Heart right ventricle (tissue), 16 donors: ENCODE measurements at regions of chr5 and their contacts with region 1.

Region 1: GRCh38 chr5:180784497-180785097 is 18.0 kb downstream of the MGAT1 start:
- DNase-seq: peak; percentile 77 to 86
- ATAC-seq: peak; percentile 70 to 83 (median 76)
- H3K4me3 ChIP-seq: no peak overlapping the region
- H3K27ac ChIP-seq: peak overlapping the region in 5 of 10 donors; percentile 54 to 87 (median 71)
- H3K4me1 ChIP-seq: peaks cover 25 to 53% (median 46%) of the 10 kb centered on the region in 9 donors
- H3K27me3 ChIP-seq: no peaks in the 10 kb centered on the region
- CTCF ChIP-seq: peak; percentile 49 to 90 (median 79)

Region 2: DNA sequence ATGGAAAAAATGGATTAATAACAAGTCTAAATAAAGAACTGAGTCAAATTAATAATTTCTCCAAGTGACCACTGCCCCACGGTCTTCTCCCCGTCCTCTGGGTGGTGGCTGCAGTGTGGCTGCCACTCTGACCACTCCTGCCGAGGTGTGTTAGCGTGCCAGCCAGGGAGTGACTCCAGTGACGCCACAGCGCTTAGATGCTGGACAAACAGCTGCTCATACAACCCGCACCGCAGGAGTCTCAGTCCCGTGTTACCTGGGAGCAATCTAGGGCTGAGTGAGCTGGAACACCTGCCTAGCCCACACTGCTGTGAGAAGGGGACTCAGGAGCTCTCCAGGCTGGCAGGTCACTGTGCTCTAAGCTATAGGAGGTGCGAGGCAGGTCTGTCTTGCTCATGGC is 502.9 kb before region 1 on chr5:
- intact Hi-C with region 1: no loop called
- DNase-seq: no peak
- ATAC-seq: no peak
- H3K4me3 ChIP-seq: no peak overlapping the region
- H3K27ac ChIP-seq: no peak overlapping the region
- H3K4me1 ChIP-seq: peaks cover 0 to 8% (median 7%) of the 10 kb centered on the region in 9 donors
- H3K27me3 ChIP-seq: no peaks in the 10 kb centered on the region
- CTCF ChIP-seq: no peak

Region 3: DNA sequence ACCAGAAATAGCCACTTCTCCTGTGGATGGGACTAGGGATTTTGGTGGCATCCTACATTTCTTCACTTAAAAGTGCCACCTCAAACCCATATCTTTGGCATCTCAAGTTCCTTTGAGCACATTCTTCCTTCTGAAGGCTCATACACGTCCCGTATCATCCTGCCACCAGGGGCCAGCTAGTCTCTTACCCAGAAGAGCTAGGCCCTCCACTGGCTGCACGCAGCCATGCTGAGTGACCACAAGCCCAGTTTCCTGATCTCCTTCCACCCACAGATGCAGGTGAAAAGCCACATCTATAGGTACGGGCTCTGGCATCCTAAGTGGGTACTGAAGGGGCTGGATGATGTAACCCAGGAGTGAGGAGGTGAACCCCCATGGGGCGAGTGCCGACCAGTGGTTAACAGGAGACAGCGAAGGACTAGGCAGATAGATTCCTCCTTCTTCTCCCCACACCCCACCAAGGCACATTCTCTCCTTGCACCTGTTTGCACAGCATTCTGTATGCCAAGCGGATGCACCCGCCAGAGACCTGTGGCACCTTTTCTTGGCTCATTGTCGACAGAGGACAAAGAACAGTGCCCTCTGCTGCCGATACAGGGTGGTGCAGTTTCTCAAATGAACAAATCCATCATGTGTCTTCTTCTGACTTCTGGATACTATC is 178.9 kb before region 1 on chr5:
- intact Hi-C with region 1: no loop called
- DNase-seq: peak in 1 of 2 donors; percentile 8
- ATAC-seq: no peak
- H3K4me3 ChIP-seq: no peak overlapping the region
- H3K27ac ChIP-seq: no peak overlapping the region
- H3K4me1 ChIP-seq: no peaks in the 10 kb centered on the region
- H3K27me3 ChIP-seq: peaks cover 0 to 14% (median 0%) of the 10 kb centered on the region in 7 donors
- CTCF ChIP-seq: peak in 8 of 9 donors; percentile 40 to 76 (median 61)

Region 4: DNA sequence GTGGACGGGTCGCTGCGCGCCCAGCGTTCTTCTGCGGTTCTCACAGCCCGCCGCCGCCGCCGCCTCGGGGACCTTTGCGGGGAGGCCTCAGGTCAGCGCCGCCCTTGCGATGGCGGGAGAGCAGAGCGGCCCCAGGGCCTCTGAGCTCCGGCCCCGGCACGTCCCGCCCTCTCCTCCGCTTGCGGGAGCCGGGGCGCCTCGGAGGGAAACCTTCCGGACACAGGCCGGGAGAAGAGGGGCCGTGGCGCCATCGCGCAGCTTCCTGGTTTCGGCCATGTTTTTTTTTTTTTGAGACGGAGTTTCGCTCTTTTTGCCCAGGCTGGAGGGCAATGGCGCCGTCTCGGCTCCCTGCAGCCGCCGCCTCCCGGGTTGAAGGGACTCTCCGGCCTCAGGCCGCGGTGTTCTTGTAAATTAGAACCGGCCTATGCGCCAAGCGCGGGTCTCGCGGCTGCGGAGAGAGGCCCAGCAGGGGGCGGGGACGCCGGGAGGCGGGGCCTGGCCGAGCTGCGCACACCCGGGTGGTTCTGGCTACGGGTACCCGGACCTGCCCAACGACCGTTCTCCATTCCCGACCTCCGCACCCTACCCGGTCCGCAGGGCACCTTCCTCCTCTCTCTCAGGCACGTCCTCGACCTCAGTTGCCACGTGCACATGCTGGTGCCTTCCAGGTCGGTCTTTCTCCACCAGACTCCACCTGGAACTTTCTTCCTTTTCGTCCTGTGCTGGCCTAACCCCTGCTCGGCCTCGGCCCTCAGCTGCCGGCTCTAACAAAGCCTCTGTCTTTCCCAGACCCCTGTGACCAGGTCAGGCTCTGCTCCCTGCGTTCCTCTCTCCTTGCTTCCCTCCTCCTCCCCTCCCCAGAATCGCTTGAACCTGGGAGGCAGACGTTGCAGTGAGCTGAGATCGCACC is 46.8 kb after region 1 on chr5:
- intact Hi-C with region 1: loop called in 1 of 10 experiments (anchors 5 kb)
- DNase-seq: peak; percentile 88 to 90
- ATAC-seq: peak; percentile 97 to 99 (median 98)
- H3K4me3 ChIP-seq: peak overlapping the region; percentile 39 to 98 (median 92)
- H3K27ac ChIP-seq: peak overlapping the region; percentile 96 to 100 (median 99)
- H3K4me1 ChIP-seq: peaks cover 5 to 53% (median 37%) of the 10 kb centered on the region in 9 donors
- H3K27me3 ChIP-seq: no peaks in the 10 kb centered on the region
- CTCF ChIP-seq: peak in 6 of 9 donors; percentile 13 to 47 (median 36)

Region 5: GRCh38 chr5:180860887-180861822 is 76.6 kb after region 1 on chr5 and contains the start of gene ZFP62:
- intact Hi-C with region 1: loop called in 6 of 10 experiments (anchors 5 kb)
- DNase-seq: peak; percentile 91 to 93
- ATAC-seq: peak; percentile 97 to 99 (median 98)
- H3K4me3 ChIP-seq: peak within 1 kb of the TSS; percentile 76 to 99 (median 96)
- H3K27ac ChIP-seq: peak within 1 kb of the TSS; percentile 91 to 97 (median 94)
- H3K4me1 ChIP-seq: peaks cover 6 to 22% (median 15%) of the 10 kb centered on the region in 9 donors
- H3K27me3 ChIP-seq: peaks cover 0 to 3% (median 0%) of the 10 kb centered on the region in 7 donors
- CTCF ChIP-seq: peak in 3 of 9 donors; percentile 4 to 23 (median 7)
- total RNA-seq, gene ZFP62: 11.3 to 17.6 (median 13.6) TPM

Region 6: DNA sequence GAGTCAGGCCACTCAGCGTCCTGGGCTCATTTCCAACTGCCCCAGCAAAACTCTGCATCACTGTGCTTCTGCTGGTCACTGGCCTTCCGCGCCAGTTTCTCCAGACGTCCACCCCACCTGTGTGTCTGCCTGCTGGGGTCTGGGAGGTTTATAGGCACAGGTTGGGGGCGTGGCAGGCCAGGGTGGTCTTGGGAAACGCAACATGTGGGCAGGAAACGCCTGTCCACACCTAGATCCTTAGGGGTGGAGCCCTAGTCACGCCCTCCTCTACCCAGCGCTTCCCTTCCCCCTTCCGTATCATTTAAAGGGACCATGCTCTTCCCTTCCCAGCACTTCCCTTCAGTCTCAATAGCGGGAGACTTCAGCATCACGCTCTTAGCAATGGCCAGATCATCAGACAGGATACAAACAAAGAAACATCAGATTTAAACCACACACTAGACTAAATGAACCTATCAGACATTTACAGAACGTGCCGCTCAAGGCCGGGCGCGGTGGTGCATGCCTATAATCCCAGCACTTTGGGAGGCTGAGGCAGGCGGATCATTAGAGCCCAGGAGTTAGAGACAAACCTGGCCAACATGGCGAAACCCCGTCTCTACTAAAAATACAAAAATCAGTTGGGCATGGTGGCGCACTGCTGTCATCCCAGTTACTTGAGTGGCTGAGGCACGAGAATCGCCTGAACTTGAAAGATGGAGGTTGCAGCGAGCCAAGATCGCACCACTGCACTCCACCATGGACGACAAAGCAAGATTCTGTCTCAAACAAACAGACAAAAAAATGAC is 243.6 kb after region 1 on chr5:
- intact Hi-C with region 1: loop called in 1 of 10 experiments (anchors 10 kb)
- DNase-seq: no peak
- ATAC-seq: peak in 6 of 8 donors; percentile 25 to 77 (median 51)
- H3K4me3 ChIP-seq: peak overlapping the region in 2 of 10 donors; percentile 10 to 15
- H3K27ac ChIP-seq: peak overlapping the region in 1 of 10 donors; percentile 26
- H3K4me1 ChIP-seq: no peaks in the 10 kb centered on the region
- H3K27me3 ChIP-seq: peaks cover 0 to 14% (median 0%) of the 10 kb centered on the region in 7 donors
- CTCF ChIP-seq: no peak

Region 7: GRCh38 chr5:181181650-181182565 is 397.3 kb after region 1 on chr5:
- intact Hi-C with region 1: loop called in 1 of 10 experiments (anchors 10 kb)
- DNase-seq: peak; percentile 68 to 69
- ATAC-seq: peak; percentile 67 to 87 (median 82)
- H3K4me3 ChIP-seq: no peak overlapping the region
- H3K27ac ChIP-seq: no peak overlapping the region
- H3K4me1 ChIP-seq: peaks cover 0 to 31% (median 16%) of the 10 kb centered on the region in 9 donors
- H3K27me3 ChIP-seq: peaks cover 0 to 10% (median 0%) of the 10 kb centered on the region in 7 donors
- CTCF ChIP-seq: peak; percentile 60 to 91 (median 79)